OCI-LY7 (cell line): ENCODE measurements at regions of chr7 and their contacts with region 1.

Region 1: GRCh38 chr7:6435486-6436384 is 12.0 kb downstream of the DAGLB start:
- DNase-seq: peak; percentile 84
- H3K4me3 ChIP-seq: peak overlapping the region; percentile 16
- H3K27ac ChIP-seq: peak overlapping the region; percentile 67
- H3K4me1 ChIP-seq: peaks cover 42% of the 10 kb centered on the region
- CTCF ChIP-seq: peak; percentile 99

Region 2: GRCh38 chr7:5854738-5855137 is 581.0 kb before region 1 on chr7:
- CTCF ChIA-PET with region 1: no interaction called
- POLR2A ChIA-PET with region 1: no interaction called
- intact Hi-C with region 1: loop called (anchors 10 kb)
- DNase-seq: no peak
- H3K4me3 ChIP-seq: no peak overlapping the region
- H3K27ac ChIP-seq: no peak overlapping the region
- H3K4me1 ChIP-seq: no peaks in the 10 kb centered on the region
- CTCF ChIP-seq: no peak

Region 3: GRCh38 chr7:6008668-6009611 is 426.8 kb before region 1 on chr7 and contains the starts of genes AIMP2 and PMS2:
- CTCF ChIA-PET with region 1: no interaction called
- POLR2A ChIA-PET with region 1: no interaction called
- intact Hi-C with region 1: loop called (anchors 10 kb)
- DNase-seq: peak; percentile 97
- H3K4me3 ChIP-seq: peak within 1 kb of the TSS; percentile 91
- H3K27ac ChIP-seq: peak within 1 kb of the TSS; percentile 57
- H3K4me1 ChIP-seq: peaks cover 40% of the 10 kb centered on the region
- CTCF ChIP-seq: peak; percentile 36
- total RNA-seq, gene AIMP2: 56.9 and 59.5 TPM in 2 replicates
- total RNA-seq, gene PMS2: 22.9 and 28.9 TPM in 2 replicates

Region 4: DNA sequence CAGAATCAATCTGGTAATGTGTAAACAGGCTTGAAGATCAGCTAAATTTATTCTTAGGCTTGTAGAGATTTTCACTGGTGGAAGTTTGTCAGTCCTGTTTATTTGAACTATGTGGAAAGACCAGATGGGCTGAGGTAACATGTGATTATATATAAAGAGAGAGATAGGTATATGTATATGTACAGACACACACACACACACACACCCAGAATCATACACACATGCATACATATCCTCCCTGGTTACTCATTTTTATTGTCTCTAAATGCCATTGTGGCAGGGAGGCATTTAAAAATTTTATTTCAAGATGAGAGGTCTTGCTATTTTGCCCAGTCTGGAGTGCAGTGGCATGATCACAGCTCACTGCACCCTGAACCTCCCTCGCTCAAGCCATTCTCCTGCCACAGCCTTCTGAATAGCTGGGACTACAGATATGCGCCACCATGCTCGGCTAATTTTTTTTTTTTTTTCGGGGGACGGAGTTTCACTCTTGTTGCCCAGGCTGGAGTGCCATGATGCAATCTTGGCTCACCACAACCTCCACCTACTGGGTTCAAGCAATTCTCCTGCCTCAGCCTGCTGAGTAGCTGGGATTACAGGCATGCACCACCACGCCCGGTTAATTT is 85.2 kb before region 1 on chr7:
- CTCF ChIA-PET with region 1: no interaction called
- POLR2A ChIA-PET with region 1: interaction called, 5 read pairs
- intact Hi-C with region 1: loop called (anchors 1 kb)
- DNase-seq: peak; percentile 39
- H3K4me3 ChIP-seq: peak overlapping the region; percentile 19
- H3K27ac ChIP-seq: peak overlapping the region; percentile 80
- H3K4me1 ChIP-seq: peaks cover 38% of the 10 kb centered on the region
- CTCF ChIP-seq: no peak

Region 5: GRCh38 chr7:6447581-6448199 is 12.0 kb after region 1 on chr7 and contains the start of gene DAGLB:
- CTCF ChIA-PET with region 1: no interaction called
- POLR2A ChIA-PET with region 1: interaction called, 19 read pairs
- intact Hi-C with region 1: no loop called
- DNase-seq: peak; percentile 97
- H3K4me3 ChIP-seq: peak within 1 kb of the TSS; percentile 89
- H3K27ac ChIP-seq: peak within 1 kb of the TSS; percentile 58
- H3K4me1 ChIP-seq: peaks cover 13% of the 10 kb centered on the region
- CTCF ChIP-seq: no peak
- total RNA-seq, gene DAGLB: 12.4 and 17.5 TPM in 2 replicates

Region 6: DNA sequence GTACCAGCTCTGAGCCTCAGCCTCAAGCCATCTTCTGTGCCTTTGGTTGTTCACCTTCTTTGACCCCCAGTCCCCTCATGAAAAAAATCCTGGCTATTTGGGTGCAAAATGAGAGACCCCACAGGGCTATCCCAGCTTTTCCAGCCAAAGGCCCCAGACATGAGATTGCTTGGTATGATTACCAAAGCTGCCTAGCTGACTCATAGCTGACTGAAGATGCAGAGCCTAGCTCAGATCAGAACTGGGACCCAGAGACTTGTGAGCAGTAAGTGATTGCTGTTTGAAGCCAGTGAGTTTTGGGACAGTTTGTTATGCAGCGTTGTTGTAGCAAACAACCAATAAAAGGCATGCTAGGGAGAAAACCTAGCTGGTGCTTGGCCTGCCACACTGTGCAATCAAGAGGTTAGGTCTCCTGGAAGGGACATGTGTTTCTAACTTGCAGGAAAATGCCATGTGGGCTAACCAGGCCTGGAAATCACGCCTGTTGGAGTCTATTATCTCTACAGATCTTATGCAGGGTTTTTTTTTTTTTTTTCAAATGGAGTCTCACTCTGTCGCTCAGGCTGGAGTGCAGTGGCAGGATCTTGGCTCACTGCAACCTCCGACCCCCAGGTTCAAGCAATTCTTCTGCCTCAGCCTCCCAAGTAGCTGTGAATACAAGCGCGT is 60.0 kb after region 1 on chr7:
- CTCF ChIA-PET with region 1: no interaction called
- POLR2A ChIA-PET with region 1: no interaction called
- intact Hi-C with region 1: no loop called
- DNase-seq: no peak
- H3K4me3 ChIP-seq: no peak overlapping the region
- H3K27ac ChIP-seq: no peak overlapping the region
- H3K4me1 ChIP-seq: no peaks in the 10 kb centered on the region
- CTCF ChIP-seq: no peak

Region 7: GRCh38 chr7:6571160-6571779 is 135.5 kb after region 1 on chr7:
- CTCF ChIA-PET with region 1: no interaction called
- POLR2A ChIA-PET with region 1: no interaction called
- intact Hi-C with region 1: no loop called
- DNase-seq: no peak
- H3K4me3 ChIP-seq: no peak overlapping the region
- H3K27ac ChIP-seq: no peak overlapping the region
- H3K4me1 ChIP-seq: peaks cover 28% of the 10 kb centered on the region
- CTCF ChIP-seq: no peak